Heart left ventricle (tissue), 16 donors: ENCODE measurements at regions of chr5 and their contacts with region 1.

Region 1: GRCh38 chr5:138128334-138128733 is 10.9 kb downstream of the NME5 start:
- DNase-seq: no peak
- ATAC-seq: no peak
- H3K4me3 ChIP-seq: no peak overlapping the region
- H3K27ac ChIP-seq: no peak overlapping the region
- H3K4me1 ChIP-seq: no peaks in the 10 kb centered on the region
- H3K27me3 ChIP-seq: no peaks in the 10 kb centered on the region
- CTCF ChIP-seq: no peak
- POLR2A ChIP-seq: no peak

Region 2: GRCh38 chr5:137635521-137635921 is 492.8 kb before region 1 on chr5:
- intact Hi-C with region 1: loop called in 2 of 10 experiments (anchors 5 to 10 kb)
- DNase-seq: no peak
- ATAC-seq: no peak
- H3K4me3 ChIP-seq: no peak overlapping the region
- H3K27ac ChIP-seq: no peak overlapping the region
- H3K4me1 ChIP-seq: peaks cover 0 to 17% (median 10%) of the 10 kb centered on the region in 12 donors
- H3K27me3 ChIP-seq: no peaks in the 10 kb centered on the region
- CTCF ChIP-seq: no peak
- POLR2A ChIP-seq: no peak

Region 3: DNA sequence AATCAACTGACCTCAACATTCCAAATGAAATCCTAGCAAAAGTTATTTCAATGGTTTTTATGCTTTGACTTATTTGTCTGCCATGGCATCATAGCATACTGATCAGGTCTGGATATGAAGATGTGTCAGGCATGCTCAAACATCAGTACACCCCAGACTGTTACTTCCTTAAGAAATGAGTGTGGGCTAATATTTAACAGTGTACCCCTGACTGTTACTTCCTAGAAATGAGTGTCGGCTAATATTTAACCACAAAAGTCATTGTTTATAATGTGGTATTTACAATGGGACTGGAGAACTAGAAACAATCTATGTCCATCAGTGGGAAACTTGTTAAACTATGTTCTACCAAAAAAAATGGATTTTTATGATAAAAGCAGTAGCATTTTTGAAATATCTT is 336.0 kb before region 1 on chr5:
- intact Hi-C with region 1: loop called in 1 of 10 experiments (anchors 5 kb)
- DNase-seq: no peak
- ATAC-seq: no peak
- H3K4me3 ChIP-seq: no peak overlapping the region
- H3K27ac ChIP-seq: no peak overlapping the region
- H3K4me1 ChIP-seq: peaks cover 0 to 9% (median 0%) of the 10 kb centered on the region in 12 donors
- H3K27me3 ChIP-seq: no peaks in the 10 kb centered on the region
- CTCF ChIP-seq: no peak
- POLR2A ChIP-seq: no peak

Region 4: DNA sequence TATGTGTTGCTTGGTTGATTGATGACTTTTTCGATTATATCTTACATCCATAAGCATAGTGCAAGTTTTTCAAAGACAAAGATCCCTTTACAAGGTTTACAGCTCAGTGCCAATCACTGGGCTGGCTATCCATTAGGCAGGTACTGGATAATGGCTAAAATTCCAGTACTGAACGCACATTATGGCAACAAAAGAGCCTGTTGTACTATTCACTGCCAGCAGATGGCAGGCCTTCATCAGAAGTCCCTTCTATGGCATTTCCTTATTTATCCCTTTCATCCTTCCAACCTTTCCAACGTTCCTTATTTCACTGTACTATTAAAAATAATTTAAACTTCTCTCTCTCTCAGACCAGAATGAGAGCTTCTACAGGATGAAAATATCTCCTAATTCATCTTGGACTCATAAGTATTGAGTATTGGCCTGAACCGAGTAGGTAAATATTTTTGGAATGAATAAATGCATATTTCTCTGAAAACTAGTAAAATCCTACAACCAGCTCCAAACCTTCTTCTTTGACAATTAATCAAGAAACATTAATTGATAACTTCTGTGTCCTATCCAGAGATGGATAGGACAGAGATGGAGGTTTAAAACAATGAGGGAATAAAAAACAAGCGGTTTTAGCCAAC is 51.2 kb before region 1 on chr5:
- intact Hi-C with region 1: loop called in 9 of 10 experiments (anchors 1 to 5 kb)
- DNase-seq: peak in 4 of 5 donors; percentile 32 to 63 (median 43)
- ATAC-seq: peak in 3 of 4 donors; percentile 53 to 72 (median 67)
- H3K4me3 ChIP-seq: no peak overlapping the region
- H3K27ac ChIP-seq: no peak overlapping the region
- H3K4me1 ChIP-seq: peaks cover 0 to 10% (median 0%) of the 10 kb centered on the region in 12 donors
- H3K27me3 ChIP-seq: no peaks in the 10 kb centered on the region
- CTCF ChIP-seq: peak; percentile 67 to 91 (median 85)
- POLR2A ChIP-seq: no peak